Endothelial cell of umbilical vein (primary cell): ENCODE measurements at regions of chr1 and their contacts with region 1.

Region 1: DNA sequence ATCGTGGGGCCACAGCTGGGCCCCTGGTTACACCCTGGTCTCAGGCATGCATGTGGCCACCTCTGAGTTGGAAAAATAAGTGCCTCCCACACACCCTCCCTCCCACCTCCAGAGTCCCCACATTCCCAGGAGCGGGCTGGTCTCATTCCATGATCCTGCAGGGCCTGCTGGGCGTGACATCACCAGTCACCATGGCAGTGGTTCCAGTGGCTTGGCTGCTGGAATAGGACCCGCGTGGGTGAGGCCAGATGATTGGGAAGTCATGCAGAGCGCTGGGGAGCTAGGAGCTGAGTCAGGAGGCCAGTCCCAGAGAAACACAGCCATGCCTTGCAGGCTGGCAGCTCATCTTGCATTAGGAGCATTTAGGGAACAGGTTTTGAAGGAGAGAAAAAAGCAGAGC is 125.4 kb upstream of the TMEM51 start:
- DNase-seq: no peak
- H3K4me3 ChIP-seq: no peak overlapping the region
- H3K27ac ChIP-seq: no peak overlapping the region
- H3K4me1 ChIP-seq: peaks cover 3% of the 10 kb centered on the region
- H3K27me3 ChIP-seq: no peaks in the 10 kb centered on the region
- CTCF ChIP-seq: no peak
- POLR2A ChIP-seq: no peak

Region 2: DNA sequence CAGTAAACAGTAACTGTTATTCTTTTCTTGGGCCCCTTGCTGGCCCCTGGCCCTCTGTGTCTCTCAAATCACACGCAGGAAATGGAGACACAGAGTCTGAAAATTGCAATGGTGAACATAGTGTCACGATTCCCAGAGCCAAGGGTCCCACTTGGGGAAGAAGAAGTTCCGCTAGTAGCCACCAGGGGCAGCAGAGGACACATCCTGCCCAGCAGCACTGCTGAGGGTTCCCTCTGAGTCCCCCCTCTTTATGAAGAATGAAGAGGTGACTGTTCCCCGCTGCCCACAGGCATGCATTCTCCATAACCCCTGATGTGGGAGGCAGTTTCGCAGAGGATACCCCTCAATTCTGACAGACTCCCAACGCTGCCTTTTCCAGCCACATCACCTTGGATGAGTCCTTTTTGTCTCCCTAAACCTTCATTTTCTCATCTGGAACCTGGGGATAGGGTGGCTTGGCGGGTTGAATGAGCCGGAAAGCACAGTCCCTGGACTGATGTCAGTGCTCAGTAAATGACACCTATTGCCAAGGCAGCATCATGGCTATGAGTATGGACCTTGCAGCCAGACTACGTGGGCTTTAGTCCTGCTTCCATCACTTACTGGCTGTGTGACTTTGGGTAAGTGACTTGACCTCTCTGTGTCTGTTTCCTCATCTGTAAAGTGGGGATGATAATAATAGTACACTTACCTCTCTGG is 112.6 kb before region 1 on chr1:
- CTCF ChIA-PET with region 1: interaction called, 10 read pairs
- POLR2A ChIA-PET with region 1: no interaction called
- dilution Hi-C with region 1: no loop called
- intact Hi-C with region 1: loop called (anchors 1 kb)
- DNase-seq: peak; percentile 47
- H3K4me3 ChIP-seq: no peak overlapping the region
- H3K27ac ChIP-seq: no peak overlapping the region
- H3K4me1 ChIP-seq: no peaks in the 10 kb centered on the region
- H3K27me3 ChIP-seq: no peaks in the 10 kb centered on the region
- CTCF ChIP-seq: peak; percentile 85 to 96
- POLR2A ChIP-seq: no peak

Region 3: GRCh38 chr1:14923727-14924452 is 104.2 kb before region 1 on chr1:
- CTCF ChIA-PET with region 1: interaction called, 13 read pairs
- POLR2A ChIA-PET with region 1: no interaction called
- dilution Hi-C with region 1: no loop called
- intact Hi-C with region 1: loop called (anchors 1 kb)
- DNase-seq: peak; percentile 20
- H3K4me3 ChIP-seq: peak overlapping the region in 1 of 3 experiments; percentile 62
- H3K27ac ChIP-seq: no peak overlapping the region
- H3K4me1 ChIP-seq: peaks cover 5% of the 10 kb centered on the region
- H3K27me3 ChIP-seq: peaks cover 8 to 14% of the 10 kb centered on the region in 2 experiments
- CTCF ChIP-seq: no peak
- POLR2A ChIP-seq: no peak

Region 4: GRCh38 chr1:15038232-15039016 is 10.3 kb after region 1 on chr1:
- CTCF ChIA-PET with region 1: interaction called, 29 read pairs
- POLR2A ChIA-PET with region 1: no interaction called
- dilution Hi-C with region 1: no loop called
- intact Hi-C with region 1: no loop called
- DNase-seq: no peak
- H3K4me3 ChIP-seq: no peak overlapping the region
- H3K27ac ChIP-seq: no peak overlapping the region
- H3K4me1 ChIP-seq: no peaks in the 10 kb centered on the region
- H3K27me3 ChIP-seq: no peaks in the 10 kb centered on the region
- CTCF ChIP-seq: peak; percentile 31 to 35
- POLR2A ChIP-seq: no peak

Region 5: DNA sequence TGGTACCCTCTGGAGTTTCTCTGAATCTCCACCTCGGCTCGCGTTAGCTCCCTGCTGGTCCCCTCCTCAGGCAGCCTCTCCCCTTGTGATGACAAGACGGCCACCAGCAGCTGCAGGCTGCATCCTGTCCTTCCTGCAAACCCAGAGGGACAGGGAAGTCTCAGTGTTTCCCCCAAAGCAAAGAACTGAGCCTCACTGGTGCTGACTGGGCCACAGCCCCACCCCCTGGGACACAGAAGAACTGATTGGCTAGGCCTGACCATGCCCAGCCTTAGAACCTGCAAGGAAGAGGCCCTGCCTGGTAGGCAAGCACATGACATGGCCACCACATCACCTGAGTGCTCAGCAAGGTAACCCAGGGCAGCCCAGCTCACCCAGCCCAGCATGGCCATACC is 160.0 kb after region 1 on chr1:
- CTCF ChIA-PET with region 1: no interaction called
- POLR2A ChIA-PET with region 1: no interaction called
- dilution Hi-C with region 1: no loop called
- intact Hi-C with region 1: no loop called
- DNase-seq: no peak
- H3K4me3 ChIP-seq: no peak overlapping the region
- H3K27ac ChIP-seq: peak overlapping the region; percentile 68
- H3K4me1 ChIP-seq: peaks cover 17% of the 10 kb centered on the region
- H3K27me3 ChIP-seq: no peaks in the 10 kb centered on the region
- CTCF ChIP-seq: no peak
- POLR2A ChIP-seq: no peak